ENCODE measurements at regions of chr12 and their contacts with region 1.

Region 1: DNA sequence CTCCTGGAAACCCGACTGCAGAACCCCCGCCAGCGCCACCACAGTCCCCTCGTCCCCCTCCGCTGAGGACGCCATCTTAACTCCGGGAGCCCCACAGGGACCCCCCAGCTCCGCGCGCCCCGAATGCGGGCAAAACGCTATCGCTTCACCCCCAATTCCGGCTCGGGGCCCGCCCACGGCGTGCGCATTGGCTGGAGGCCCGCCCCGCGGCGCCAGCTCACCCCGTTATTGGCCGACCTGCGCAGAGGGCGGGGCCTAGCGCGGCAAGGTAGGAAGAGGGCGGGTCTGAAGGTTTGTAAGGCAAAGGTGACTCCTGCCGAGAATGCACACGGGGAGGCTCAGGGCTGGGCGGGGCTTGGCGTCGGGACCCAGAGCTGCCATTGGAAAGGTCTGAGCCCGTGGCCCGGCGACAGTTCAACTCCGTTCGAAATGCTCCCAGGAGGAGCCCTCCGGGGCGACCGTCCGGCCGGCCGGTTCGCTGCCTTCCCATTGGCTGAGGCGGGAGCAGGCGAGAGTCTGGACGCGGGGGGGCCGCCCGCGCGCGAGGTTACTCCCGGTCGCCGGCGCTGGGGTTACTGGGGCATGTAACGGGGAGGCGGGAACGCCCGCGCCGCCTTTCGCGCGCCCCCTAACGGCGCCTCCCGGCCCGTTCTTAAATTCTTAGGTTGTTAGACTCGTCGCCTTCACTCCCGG is at the start of gene LPCAT3:
- DNase-seq: peak; percentile 97 to 99
- ATAC-seq: peak; percentile 91 to 98 (median 91)
- H3K4me3 ChIP-seq: peak within 1 kb of the TSS; percentile 92
- H3K4me3 Mint-ChIP-seq: peak within 1 kb of the TSS; percentile 87
- H3K27ac ChIP-seq: peak within 1 kb of the TSS; percentile 93
- H3K27ac Mint-ChIP-seq: peak within 1 kb of the TSS; percentile 69 to 82
- H3K4me1 ChIP-seq: peaks cover 11% of the 10 kb centered on the region
- H3K4me1 Mint-ChIP-seq: peaks cover 13 to 25% of the 10 kb centered on the region in 2 donors
- H3K27me3 ChIP-seq: no peaks in the 10 kb centered on the region
- H3K27me3 Mint-ChIP-seq: no peaks in the 10 kb centered on the region
- CTCF ChIP-seq: peak; percentile 89
- total RNA-seq, gene LPCAT3: 45.6 to 54.3 (median 45.6) TPM

Region 2: GRCh38 chr12:6851921-6852650 is 166.4 kb before region 1 on chr12 and contains the start of gene USP5:
- intact Hi-C with region 1: loop called (anchors 1 kb)
- DNase-seq: peak; percentile 96 to 99
- ATAC-seq: peak; percentile 79 to 92 (median 80)
- H3K4me3 ChIP-seq: peak within 1 kb of the TSS; percentile 76
- H3K4me3 Mint-ChIP-seq: peak within 1 kb of the TSS; percentile 91
- H3K27ac ChIP-seq: peak within 1 kb of the TSS; percentile 95
- H3K27ac Mint-ChIP-seq: peak within 1 kb of the TSS; percentile 95 to 99
- H3K4me1 ChIP-seq: peaks cover 22% of the 10 kb centered on the region
- H3K4me1 Mint-ChIP-seq: peaks cover 8 to 43% of the 10 kb centered on the region in 2 donors
- H3K27me3 ChIP-seq: no peaks in the 10 kb centered on the region
- H3K27me3 Mint-ChIP-seq: no peaks in the 10 kb centered on the region
- CTCF ChIP-seq: no peak
- total RNA-seq, gene USP5: 48.3 to 67.2 (median 57.2) TPM

Region 3: DNA sequence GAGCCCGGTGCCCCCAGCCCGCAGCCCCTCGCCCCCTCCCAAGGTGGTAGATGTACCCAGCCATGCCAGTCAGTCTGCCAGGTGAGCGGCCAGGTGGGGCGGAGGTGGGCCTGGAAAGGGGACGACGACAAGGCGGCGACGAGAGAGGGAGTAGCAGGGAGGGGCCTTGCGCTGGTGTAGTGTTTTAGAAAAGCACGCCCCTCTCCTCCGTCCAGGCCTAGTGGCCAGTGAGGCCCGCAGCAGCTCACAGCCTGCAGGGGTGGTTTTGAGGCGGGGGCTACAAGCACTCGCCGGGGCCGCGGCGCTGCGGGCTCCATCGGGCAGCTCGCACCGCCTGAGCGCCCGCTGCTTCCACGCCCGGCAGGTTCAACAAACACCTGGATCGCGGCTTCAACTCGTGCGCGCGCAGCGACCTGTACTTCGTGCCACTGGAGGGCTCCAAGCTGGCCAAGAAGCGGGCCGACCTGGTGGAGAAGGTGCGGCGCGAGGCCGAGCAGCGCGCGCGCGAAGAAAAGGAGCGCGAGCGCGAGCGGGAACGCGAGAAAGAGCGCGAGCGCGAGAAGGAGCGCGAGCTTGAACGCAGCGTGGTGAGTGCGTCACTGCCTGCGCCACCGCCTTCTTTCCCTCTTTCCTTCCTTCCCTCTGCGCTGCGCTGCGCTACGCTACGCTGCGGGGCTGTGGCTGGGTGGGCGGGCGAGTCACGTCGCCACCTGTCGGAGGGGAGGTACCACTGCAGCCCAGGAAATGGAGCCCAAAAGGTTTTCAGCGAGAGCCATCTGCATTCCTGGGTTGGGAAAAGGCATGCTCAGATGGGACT is 80.8 kb before region 1 on chr12:
- intact Hi-C with region 1: loop called (anchors 1 kb)
- DNase-seq: peak; percentile 88 to 99
- ATAC-seq: peak; percentile 96 to 99 (median 97)
- H3K4me3 ChIP-seq: peak overlapping the region; percentile 60
- H3K4me3 Mint-ChIP-seq: peak overlapping the region; percentile 83
- H3K27ac ChIP-seq: peak overlapping the region; percentile 74
- H3K27ac Mint-ChIP-seq: peak overlapping the region; percentile 82 to 90
- H3K4me1 ChIP-seq: peaks cover 27% of the 10 kb centered on the region
- H3K4me1 Mint-ChIP-seq: peaks cover 11 to 35% of the 10 kb centered on the region in 2 donors
- H3K27me3 ChIP-seq: no peaks in the 10 kb centered on the region
- H3K27me3 Mint-ChIP-seq: no peaks in the 10 kb centered on the region
- CTCF ChIP-seq: peak; percentile 86

Region 4: GRCh38 chr12:6965026-6965661 is 53.4 kb before region 1 on chr12:
- intact Hi-C with region 1: loop called (anchors 1 kb)
- DNase-seq: peak; percentile 84 to 95
- ATAC-seq: peak; percentile 53 to 70 (median 54)
- H3K4me3 ChIP-seq: no peak overlapping the region
- H3K4me3 Mint-ChIP-seq: peak overlapping the region; percentile 21
- H3K27ac ChIP-seq: peak overlapping the region; percentile 38
- H3K27ac Mint-ChIP-seq: peak overlapping the region; percentile 80 to 82
- H3K4me1 ChIP-seq: peaks cover 52% of the 10 kb centered on the region
- H3K4me1 Mint-ChIP-seq: peaks cover 32 to 41% of the 10 kb centered on the region in 2 donors
- H3K27me3 ChIP-seq: no peaks in the 10 kb centered on the region
- H3K27me3 Mint-ChIP-seq: no peaks in the 10 kb centered on the region
- CTCF ChIP-seq: peak; percentile 88

Region 5: GRCh38 chr12:6987948-6988553 is 30.4 kb before region 1 on chr12:
- intact Hi-C with region 1: no loop called
- DNase-seq: no peak
- ATAC-seq: no peak
- H3K4me3 ChIP-seq: no peak overlapping the region
- H3K4me3 Mint-ChIP-seq: no peak overlapping the region
- H3K27ac ChIP-seq: no peak overlapping the region
- H3K27ac Mint-ChIP-seq: no peak overlapping the region
- H3K4me1 ChIP-seq: no peaks in the 10 kb centered on the region
- H3K4me1 Mint-ChIP-seq: peaks cover 0 to 5% of the 10 kb centered on the region in 2 donors
- H3K27me3 ChIP-seq: no peaks in the 10 kb centered on the region
- H3K27me3 Mint-ChIP-seq: no peaks in the 10 kb centered on the region
- CTCF ChIP-seq: no peak

Region 6: DNA sequence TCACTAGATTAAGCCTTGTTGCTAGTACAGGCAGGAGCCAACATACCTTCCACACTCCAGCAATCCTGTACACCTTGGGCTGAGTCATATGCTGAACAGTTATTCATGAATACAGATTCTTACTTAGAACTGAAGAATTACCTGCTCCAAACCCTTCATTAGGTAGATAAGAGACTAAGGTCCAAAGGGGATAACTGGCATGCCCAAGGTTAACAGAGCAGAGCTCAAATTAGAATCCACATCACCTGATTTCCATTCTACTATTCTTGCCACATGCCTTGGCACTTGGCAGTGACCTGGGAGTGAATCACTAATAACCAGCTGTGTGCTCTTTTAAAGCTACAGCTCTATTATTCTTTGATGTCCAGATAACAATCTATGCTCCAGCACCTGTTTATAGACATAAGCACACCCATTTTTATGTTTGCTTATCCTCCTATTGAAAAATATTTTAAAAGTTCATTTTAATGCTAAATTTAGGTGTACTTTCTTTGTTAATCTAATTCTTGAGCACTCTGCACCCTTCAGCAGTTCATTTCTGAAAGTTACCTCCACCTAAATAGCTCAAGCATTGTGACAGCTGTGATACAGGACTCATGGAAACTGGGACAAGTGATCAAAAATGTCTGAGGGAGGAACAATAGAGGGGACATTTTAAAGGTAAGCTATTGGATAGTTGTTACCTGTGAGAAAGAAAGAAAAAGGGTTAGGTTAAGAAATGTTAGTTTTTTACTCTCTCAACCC is 19.6 kb before region 1 on chr12:
- intact Hi-C with region 1: no loop called
- DNase-seq: no peak
- ATAC-seq: no peak
- H3K4me3 ChIP-seq: no peak overlapping the region
- H3K4me3 Mint-ChIP-seq: no peak overlapping the region
- H3K27ac ChIP-seq: no peak overlapping the region
- H3K27ac Mint-ChIP-seq: no peak overlapping the region
- H3K4me1 ChIP-seq: no peaks in the 10 kb centered on the region
- H3K4me1 Mint-ChIP-seq: peaks cover 0 to 19% of the 10 kb centered on the region in 2 donors
- H3K27me3 ChIP-seq: no peaks in the 10 kb centered on the region
- H3K27me3 Mint-ChIP-seq: no peaks in the 10 kb centered on the region
- CTCF ChIP-seq: no peak

Region 7: GRCh38 chr12:7042842-7043241 is 24.3 kb after region 1 on chr12:
- intact Hi-C with region 1: no loop called
- DNase-seq: peak in 1 of 2 donors; percentile 40
- ATAC-seq: no peak
- H3K4me3 ChIP-seq: no peak overlapping the region
- H3K4me3 Mint-ChIP-seq: no peak overlapping the region
- H3K27ac ChIP-seq: no peak overlapping the region
- H3K27ac Mint-ChIP-seq: no peak overlapping the region
- H3K4me1 ChIP-seq: no peaks in the 10 kb centered on the region
- H3K4me1 Mint-ChIP-seq: peaks cover 0 to 4% of the 10 kb centered on the region in 2 donors
- H3K27me3 ChIP-seq: no peaks in the 10 kb centered on the region
- H3K27me3 Mint-ChIP-seq: peaks cover 0 to 3% of the 10 kb centered on the region in 2 donors
- CTCF ChIP-seq: no peak

Region 8: DNA sequence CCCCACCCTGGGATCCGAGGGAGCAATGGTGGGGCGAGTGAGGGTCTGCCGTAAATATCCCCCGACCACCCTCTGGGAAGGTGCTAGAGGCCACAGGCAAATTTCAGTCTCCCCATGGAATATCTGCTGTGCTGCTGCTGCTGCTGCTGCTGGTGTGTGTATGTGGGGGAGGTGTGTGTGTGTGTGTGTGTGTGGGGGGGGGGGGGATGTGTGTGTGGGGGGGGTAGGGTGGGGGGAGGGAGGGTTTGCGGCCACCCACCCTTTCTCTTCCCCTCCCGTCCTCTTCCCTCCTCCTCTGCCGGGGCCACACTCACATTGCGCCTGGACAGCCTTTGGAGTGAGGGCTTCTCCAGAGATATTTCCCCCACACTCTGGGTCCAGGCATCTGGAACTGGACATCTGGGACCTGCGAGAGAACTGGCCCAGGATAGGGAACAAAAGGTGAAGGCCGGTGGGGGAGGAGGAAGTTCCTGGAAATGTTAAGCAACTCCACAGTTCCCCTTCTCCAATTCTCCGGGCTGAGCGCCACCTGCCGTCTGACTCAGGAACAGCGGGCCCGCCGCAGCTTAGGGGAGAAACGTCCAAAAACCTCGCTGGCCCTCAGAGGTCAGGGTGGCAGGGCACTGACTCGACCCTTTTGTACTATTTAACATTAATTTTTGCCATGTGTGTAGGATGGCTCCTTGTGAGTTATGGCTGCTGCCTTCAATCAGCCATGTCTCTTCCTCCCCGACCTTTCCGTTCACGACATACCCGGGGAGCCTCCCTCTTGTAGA is 90.5 kb after region 1 on chr12 and contains the start of gene C1RL:
- intact Hi-C with region 1: loop called (anchors 5 kb)
- DNase-seq: peak; percentile 80 to 81
- ATAC-seq: peak; percentile 54 to 65 (median 63)
- H3K4me3 ChIP-seq: peak within 1 kb of the TSS; percentile 65
- H3K4me3 Mint-ChIP-seq: peak within 1 kb of the TSS; percentile 92
- H3K27ac ChIP-seq: peak within 1 kb of the TSS; percentile 72
- H3K27ac Mint-ChIP-seq: peak within 1 kb of the TSS; percentile 84 to 96
- H3K4me1 ChIP-seq: peaks cover 29% of the 10 kb centered on the region
- H3K4me1 Mint-ChIP-seq: peaks cover 40 to 46% of the 10 kb centered on the region in 2 donors
- H3K27me3 ChIP-seq: no peaks in the 10 kb centered on the region
- H3K27me3 Mint-ChIP-seq: no peaks in the 10 kb centered on the region
- CTCF ChIP-seq: peak; percentile 93
- total RNA-seq, gene C1RL: 29.1 to 35.5 (median 31.0) TPM

Measured in natural killer cell (primary cell).